Endothelial cell of umbilical vein (primary cell): ENCODE measurements at regions of chr5 and their contacts with region 1.

Region 1: GRCh38 chr5:138178516-138179276 is at the starts of genes BRD8 and KIF20A:
- DNase-seq: peak; percentile 98
- H3K4me3 ChIP-seq: peak within 1 kb of the TSS; percentile 71 to 95 (median 87)
- H3K27ac ChIP-seq: peak within 1 kb of the TSS; percentile 68
- H3K4me1 ChIP-seq: peaks cover 22% of the 10 kb centered on the region
- H3K27me3 ChIP-seq: no peaks in the 10 kb centered on the region
- CTCF ChIP-seq: no peak
- POLR2A ChIP-seq: peak; percentile 69
- total RNA-seq, gene BRD8: 69.7 and 73.7 TPM in 2 replicates
- total RNA-seq, gene KIF20A: 72.0 and 78.1 TPM in 2 replicates

Region 2: GRCh38 chr5:138213161-138214029 is 34.7 kb after region 1 on chr5 and contains the start of gene CDC23:
- CTCF ChIA-PET with region 1: no interaction called
- POLR2A ChIA-PET with region 1: no interaction called
- dilution Hi-C with region 1: no loop called
- intact Hi-C with region 1: loop called (anchors 1 kb)
- DNase-seq: peak; percentile 99
- H3K4me3 ChIP-seq: peak within 1 kb of the TSS; percentile 46 to 71 (median 61)
- H3K27ac ChIP-seq: peak within 1 kb of the TSS; percentile 77
- H3K4me1 ChIP-seq: peaks cover 11% of the 10 kb centered on the region
- H3K27me3 ChIP-seq: no peaks in the 10 kb centered on the region
- CTCF ChIP-seq: no peak
- POLR2A ChIP-seq: peak; percentile 27
- total RNA-seq, gene CDC23: 39.4 and 41.2 TPM in 2 replicates

Region 3: DNA sequence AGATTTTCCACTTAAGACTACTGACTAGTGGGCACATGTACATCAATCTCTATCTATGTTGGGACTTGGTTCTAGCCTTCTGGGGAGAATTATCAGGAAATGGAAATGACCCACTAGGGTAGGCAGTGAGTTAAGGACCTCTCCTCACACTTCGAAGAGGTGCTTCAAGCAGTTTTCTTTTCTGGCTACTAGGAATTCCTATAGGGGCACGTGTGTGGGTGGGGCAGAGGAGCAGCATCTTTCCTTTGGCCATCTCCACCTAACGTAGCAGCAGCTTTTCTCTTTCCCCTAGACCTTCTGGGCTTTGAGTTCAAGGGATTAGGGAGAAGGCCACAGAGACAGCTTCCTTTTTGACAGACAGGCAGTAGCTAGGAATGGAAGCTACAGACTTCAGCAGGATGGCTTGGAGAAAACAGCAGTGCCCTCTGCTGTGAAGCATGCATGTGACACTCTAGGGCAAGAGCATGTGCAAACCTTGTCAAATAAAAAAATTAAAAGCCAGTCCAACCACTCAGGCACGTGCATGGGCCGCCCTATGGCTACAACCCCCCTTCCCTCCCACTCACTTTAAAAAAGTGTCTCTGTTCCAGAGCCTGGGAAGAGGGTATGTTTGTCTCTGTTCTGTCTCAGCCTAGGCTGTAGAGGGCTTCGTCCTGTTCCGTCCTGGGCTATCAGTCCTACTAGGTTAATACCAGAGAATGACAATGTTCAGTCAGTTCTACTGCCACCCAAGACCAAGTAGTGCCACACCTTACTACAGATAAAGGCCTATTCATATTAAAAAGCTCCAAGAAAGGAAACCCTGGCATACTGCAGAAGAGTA is 104.4 kb after region 1 on chr5:
- CTCF ChIA-PET with region 1: interaction called, 16 read pairs
- POLR2A ChIA-PET with region 1: no interaction called
- dilution Hi-C with region 1: no loop called
- intact Hi-C with region 1: loop called (anchors 1 kb)
- DNase-seq: peak; percentile 63
- H3K4me3 ChIP-seq: no peak overlapping the region
- H3K27ac ChIP-seq: no peak overlapping the region
- H3K4me1 ChIP-seq: no peaks in the 10 kb centered on the region
- H3K27me3 ChIP-seq: no peaks in the 10 kb centered on the region
- CTCF ChIP-seq: peak; percentile 18 to 70
- POLR2A ChIP-seq: no peak

Region 4: DNA sequence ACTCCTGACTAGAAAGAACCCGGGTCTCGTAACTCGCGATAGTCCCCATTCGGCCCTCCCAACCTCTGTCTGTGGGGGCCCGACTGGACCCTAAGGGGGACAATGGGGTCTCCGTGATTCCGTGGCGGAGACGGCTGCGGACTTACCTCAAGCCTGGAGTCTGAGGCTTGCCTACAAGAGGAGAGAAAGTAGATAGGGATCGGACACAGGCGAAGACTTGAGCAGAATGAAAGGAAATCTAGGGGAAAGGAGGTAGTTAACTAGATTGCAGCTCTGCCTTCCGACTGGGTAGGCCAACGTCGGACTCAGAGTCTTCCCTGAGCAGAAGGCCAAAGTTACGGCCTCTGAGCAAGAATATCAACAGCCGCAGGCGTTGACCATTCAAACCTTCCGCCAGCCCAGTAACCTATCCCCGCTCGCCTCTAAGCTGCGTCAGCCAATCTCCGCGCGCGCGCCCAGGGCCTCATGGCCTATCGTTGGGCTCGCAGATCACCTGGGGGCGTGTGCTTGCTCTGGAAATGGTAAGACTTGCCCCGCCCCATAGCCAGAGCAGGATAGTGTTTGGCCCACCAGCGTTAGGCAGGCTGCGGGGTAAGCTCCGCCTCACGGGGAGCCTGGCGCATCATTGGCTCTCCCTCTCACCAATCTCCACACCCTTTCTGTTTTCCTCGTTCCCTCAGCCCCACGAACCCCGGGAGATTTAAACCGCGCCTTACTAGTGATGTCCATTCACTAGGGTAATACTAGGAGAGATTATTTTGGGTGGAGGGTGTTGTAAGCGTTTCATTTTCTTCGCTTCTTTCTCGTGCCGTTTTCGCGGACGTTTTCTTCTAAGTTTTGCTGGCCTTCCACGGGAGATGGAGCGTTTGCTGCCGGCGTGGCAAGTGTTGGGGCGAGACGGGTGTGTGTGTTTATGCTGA is 153.0 kb after region 1 on chr5 and contains the start of gene CDC25C:
- CTCF ChIA-PET with region 1: no interaction called
- POLR2A ChIA-PET with region 1: no interaction called
- dilution Hi-C with region 1: no loop called
- intact Hi-C with region 1: loop called (anchors 5 kb)
- DNase-seq: peak; percentile 100
- H3K4me3 ChIP-seq: peak within 1 kb of the TSS; percentile 55 to 86 (median 79)
- H3K27ac ChIP-seq: peak within 1 kb of the TSS; percentile 4
- H3K4me1 ChIP-seq: peaks cover 9% of the 10 kb centered on the region
- H3K27me3 ChIP-seq: no peaks in the 10 kb centered on the region
- CTCF ChIP-seq: no peak
- POLR2A ChIP-seq: peak; percentile 80
- total RNA-seq, gene CDC25C: 13.3 and 13.6 TPM in 2 replicates

Region 5: GRCh38 chr5:138408023-138408422 is 229.3 kb after region 1 on chr5:
- CTCF ChIA-PET with region 1: no interaction called
- POLR2A ChIA-PET with region 1: no interaction called
- dilution Hi-C with region 1: no loop called
- intact Hi-C with region 1: loop called (anchors 1 kb)
- DNase-seq: no peak
- H3K4me3 ChIP-seq: no peak overlapping the region
- H3K27ac ChIP-seq: no peak overlapping the region
- H3K4me1 ChIP-seq: no peaks in the 10 kb centered on the region
- H3K27me3 ChIP-seq: no peaks in the 10 kb centered on the region
- CTCF ChIP-seq: no peak
- POLR2A ChIP-seq: no peak